ENCODE measurements at regions of chr5 and their contacts with region 1.

Region 1: DNA sequence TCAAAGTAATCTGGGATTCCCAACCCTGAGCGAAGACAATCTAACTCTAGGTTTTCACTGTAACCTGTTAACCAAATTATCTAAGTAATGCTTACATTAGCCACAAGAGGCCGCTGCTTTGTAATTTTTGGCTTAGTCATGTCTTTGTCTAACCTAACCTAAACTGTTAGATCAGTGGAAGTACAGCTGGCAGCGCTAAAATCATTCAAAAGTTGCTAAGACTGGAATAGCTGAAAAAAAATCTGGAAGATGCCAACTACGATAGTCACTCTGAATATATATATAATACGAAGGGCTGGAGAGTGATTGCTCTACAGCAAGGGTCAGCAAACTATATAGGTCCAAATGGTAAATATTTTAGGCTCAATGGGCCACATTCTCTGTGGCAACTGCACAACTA is 60.2 kb downstream of the FBXO38 start:
- DNase-seq: peak; percentile 42 to 69
- ATAC-seq: peak; percentile 93 to 96
- H3K4me3 ChIP-seq: no peak overlapping the region
- H3K27ac ChIP-seq: no peak overlapping the region
- H3K4me1 ChIP-seq: no peaks in the 10 kb centered on the region
- CTCF ChIP-seq: peak; percentile 83
- EP300 ChIP-seq: no peak
- POLR2A ChIP-seq: no peak
- RAD21 ChIP-seq: peak; percentile 69 to 72

Region 2: DNA sequence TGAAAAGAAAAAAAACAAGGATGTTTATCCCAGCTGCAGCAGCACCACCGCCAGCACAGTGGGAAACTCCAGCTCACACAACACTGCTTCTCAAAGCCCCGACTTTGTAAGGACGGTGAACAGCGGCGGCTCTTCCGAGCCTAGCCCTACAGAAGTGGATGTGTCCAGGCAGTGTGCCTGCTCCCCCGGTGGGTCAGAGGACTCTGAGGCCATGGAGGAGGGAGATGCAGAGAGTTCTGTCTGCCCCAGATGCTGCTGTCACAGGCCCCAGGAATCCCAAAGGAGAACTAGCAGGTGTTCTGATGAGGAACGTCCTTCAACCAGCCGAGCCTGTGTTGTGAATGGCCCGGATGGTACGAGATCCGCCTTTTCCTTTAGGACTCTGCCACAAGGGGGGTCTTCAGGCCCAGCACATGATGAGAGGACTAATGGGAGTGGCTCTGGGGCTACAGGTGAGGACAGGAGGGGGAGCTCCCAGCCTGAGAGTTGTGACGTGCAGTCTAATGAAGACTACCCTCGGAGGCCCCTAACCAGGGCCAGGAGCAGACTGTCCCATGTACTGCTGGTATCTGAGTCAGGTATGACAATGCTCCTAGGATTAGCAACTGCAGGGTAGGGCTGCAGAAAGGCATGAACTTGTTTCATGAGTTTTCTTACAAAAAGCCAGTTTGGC is 16.5 kb before region 1 on chr5:
- CTCF ChIA-PET with region 1: interaction called, 23 read pairs
- POLR2A ChIA-PET with region 1: no interaction called
- DNase-seq: no peak
- ATAC-seq: no peak; a peak in 2 of 6 replicates
- H3K4me3 ChIP-seq: no peak overlapping the region
- H3K27ac ChIP-seq: no peak overlapping the region
- H3K4me1 ChIP-seq: no peaks in the 10 kb centered on the region
- CTCF ChIP-seq: no peak
- EP300 ChIP-seq: no peak
- POLR2A ChIP-seq: no peak
- RAD21 ChIP-seq: no peak

Region 3: DNA sequence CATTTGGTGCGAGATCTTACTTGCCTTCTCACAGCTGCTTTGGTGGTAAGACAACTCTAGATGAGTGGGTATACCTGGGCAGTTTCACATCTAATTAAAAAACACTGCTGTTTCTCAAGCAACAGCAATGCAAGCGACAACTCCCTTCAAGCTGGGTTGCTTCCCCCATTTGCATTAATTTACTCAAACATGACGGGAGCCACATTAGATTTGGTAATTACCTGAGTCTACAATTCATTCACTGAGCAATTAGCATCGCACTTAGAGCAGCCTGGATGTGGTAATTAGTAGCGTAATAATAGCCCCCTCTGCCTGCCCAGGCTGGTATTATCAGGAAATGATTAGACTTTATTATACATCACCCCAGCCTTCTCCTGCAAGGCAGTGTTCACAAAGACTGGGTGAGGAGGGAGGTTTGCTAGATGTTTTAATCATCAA is 13.2 kb after region 1 on chr5:
- CTCF ChIA-PET with region 1: interaction called, 38 read pairs
- POLR2A ChIA-PET with region 1: no interaction called
- DNase-seq: peak; percentile 9 to 12
- ATAC-seq: peak; percentile 69 to 82; a peak in 4 of 6 replicates
- H3K4me3 ChIP-seq: no peak overlapping the region
- H3K27ac ChIP-seq: no peak overlapping the region
- H3K4me1 ChIP-seq: no peaks in the 10 kb centered on the region
- CTCF ChIP-seq: peak; percentile 42
- EP300 ChIP-seq: no peak
- POLR2A ChIP-seq: no peak
- RAD21 ChIP-seq: peak in 1 of 2 experiments; percentile 27; a peak in 2 of 5 replicates

Region 4: DNA sequence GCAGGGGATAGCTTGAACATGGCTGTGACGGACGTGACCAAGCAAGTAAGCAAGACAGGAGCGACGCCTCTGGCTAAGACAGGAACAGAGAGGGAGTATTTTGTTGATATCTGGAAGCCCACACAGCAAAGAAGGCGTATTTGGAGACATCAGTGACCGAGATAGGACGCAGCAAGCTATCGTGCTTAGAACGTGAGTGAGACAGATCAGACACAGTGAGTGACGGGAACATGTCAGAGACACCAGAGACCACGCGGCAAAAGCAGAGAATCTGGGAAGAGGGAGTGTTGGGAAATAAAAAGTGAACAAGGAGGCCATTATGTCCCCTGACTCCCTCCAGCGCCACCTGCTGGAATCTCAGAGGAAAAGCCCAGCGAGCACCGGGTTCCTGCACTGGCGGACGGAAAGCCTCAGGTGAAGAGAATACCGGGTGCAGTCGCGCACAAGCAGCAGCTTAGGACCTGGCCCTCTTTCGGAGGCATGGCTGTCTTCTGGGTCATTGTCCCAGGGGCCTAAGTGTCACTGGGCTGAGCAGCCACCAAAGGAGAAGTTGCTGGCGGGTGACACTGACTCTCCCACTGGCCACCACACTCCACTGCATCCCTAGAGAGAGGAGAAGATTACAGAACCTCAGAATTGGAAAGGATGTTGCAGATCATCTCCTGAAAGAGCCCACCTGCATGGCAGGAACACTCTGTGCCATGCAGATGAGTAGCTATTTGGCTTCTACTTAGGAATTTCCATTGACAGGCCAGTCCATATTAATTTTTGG is 38.9 kb after region 1 on chr5:
- CTCF ChIA-PET with region 1: interaction called, 36 read pairs
- POLR2A ChIA-PET with region 1: no interaction called
- DNase-seq: peak; percentile 69 to 72
- ATAC-seq: peak; percentile 93 to 96
- H3K4me3 ChIP-seq: peak overlapping the region; percentile 46
- H3K27ac ChIP-seq: no peak overlapping the region; a peak in 1 of 6 replicates
- H3K4me1 ChIP-seq: 0 out of 3 replicates have a peak, but pooled peaks cover 3% of the 10 kb centered on the region
- CTCF ChIP-seq: peak; percentile 79
- EP300 ChIP-seq: no peak
- POLR2A ChIP-seq: no peak
- RAD21 ChIP-seq: peak; percentile 47 to 49; a peak in 4 of 5 replicates

Measured in A549 (cell line).